GM10248 (cell line): ENCODE measurements at regions of chr3 and their contacts with region 1.

Region 1: GRCh38 chr3:4350789-4351163 is 47.6 kb downstream of the SETMAR start:
- DNase-seq: peak; percentile 72
- CTCF ChIP-seq: peak; percentile 63

Region 2: DNA sequence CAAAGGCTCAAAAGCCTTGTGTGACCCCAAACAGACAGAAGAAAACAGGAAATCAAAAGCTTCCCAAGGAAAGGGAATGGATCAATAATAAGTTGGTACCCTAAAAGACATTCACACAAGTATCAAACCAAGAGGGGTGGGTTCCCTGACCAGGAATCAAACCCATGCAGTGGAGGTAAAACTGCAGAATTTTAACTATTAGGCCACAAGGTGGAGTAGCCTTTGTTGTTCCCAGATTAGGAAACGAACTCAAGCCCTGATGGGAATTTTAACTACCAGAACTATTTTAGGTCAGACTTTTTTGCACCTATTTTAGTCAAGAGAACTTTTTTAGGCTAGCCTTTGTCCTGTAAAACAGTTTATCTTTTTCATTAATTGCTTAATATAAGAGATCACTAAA is 16.2 kb before region 1 on chr3:
- CTCF ChIA-PET with region 1: interaction called, 12 read pairs
- POLR2A ChIA-PET with region 1: no interaction called
- DNase-seq: no peak
- CTCF ChIP-seq: peak; percentile 12

Region 3: DNA sequence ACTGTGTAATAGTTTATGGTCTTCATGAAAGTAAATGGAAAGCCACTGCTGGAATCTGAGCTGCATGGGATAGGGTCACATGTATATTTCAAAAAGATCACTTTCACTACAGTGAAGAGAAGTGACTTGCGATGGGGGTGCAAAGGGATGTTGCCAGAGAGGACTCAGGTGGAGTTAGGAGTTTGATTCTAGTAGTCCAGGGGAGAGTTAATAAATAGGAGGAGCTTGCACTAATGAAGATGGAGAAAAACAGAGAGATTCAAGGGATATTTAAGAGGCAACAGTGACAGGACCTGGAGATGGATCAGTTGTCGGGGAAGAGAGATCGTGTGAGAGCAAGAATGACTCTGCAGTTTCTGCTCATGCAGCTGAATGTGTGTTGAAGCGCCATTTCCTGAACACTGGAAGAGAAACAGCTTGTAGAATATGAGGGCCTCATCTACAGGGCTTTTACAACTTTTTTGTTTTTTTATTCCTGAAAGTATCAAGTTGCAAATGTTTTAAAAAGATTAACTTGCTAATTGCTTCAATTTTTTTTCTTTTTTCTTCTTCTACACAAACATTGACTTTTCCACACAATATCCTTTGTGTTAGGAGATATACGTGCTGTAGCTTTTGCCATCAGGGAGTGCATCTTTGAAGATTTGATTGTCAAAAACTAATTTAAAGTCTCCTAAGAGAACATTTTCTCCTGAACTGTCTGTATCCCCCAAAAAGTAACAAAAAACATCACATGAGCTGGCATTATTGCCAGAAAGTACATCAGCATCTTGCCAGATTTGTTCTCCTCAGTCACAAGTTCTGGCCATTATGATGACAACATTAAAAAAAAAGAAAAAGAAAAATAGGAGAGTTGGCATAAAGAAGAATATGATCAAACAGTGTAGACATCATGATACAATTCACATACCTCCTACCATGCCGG is 10.1 kb before region 1 on chr3:
- CTCF ChIA-PET with region 1: interaction called, 19 read pairs
- POLR2A ChIA-PET with region 1: no interaction called
- DNase-seq: no peak
- CTCF ChIP-seq: no peak

Region 4: GRCh38 chr3:4466741-4467521 is 116.2 kb after region 1 on chr3 and contains the start of gene SUMF1:
- CTCF ChIA-PET with region 1: interaction called, 11 read pairs
- POLR2A ChIA-PET with region 1: no interaction called
- DNase-seq: peak; percentile 93
- CTCF ChIP-seq: no peak